ENCODE measurements at regions of chr5 and their contacts with region 1.

Region 1: GRCh38 chr5:140351609-140352334 is 5.4 kb upstream of the HBEGF start:
- DNase-seq: no peak
- H3K4me3 ChIP-seq: no peak overlapping the region
- H3K27ac ChIP-seq: no peak overlapping the region
- H3K27me3 ChIP-seq: no peaks in the 10 kb centered on the region
- CTCF ChIP-seq: peak; percentile 86

Region 2: GRCh38 chr5:140261403-140262171 is 90.2 kb before region 1 on chr5:
- CTCF ChIA-PET with region 1: interaction called, 98 read pairs
- POLR2A ChIA-PET with region 1: interaction called, 6 read pairs
- DNase-seq: peak; percentile 72
- H3K4me3 ChIP-seq: 0 out of 2 replicates have a peak overlapping the region, but pooled peaks have one; percentile 5
- H3K27ac ChIP-seq: no peak overlapping the region
- H3K27me3 ChIP-seq: no peaks in the 10 kb centered on the region
- CTCF ChIP-seq: peak; percentile 19; the same call in 1 of the 2 replicates

Region 3: GRCh38 chr5:140273401-140273877 is 78.3 kb before region 1 on chr5:
- CTCF ChIA-PET with region 1: interaction called, 16 read pairs
- POLR2A ChIA-PET with region 1: no interaction called
- DNase-seq: no peak
- H3K4me3 ChIP-seq: no peak overlapping the region
- H3K27ac ChIP-seq: no peak overlapping the region
- H3K27me3 ChIP-seq: no peaks in the 10 kb centered on the region
- CTCF ChIP-seq: no peak

Region 4: GRCh38 chr5:140322751-140323731 is 28.7 kb before region 1 on chr5:
- CTCF ChIA-PET with region 1: interaction called, 15 read pairs
- POLR2A ChIA-PET with region 1: interaction called, 8 read pairs
- DNase-seq: peak; percentile 88
- H3K4me3 ChIP-seq: peak overlapping the region; percentile 7; the same call in 1 of the 2 replicates
- H3K27ac ChIP-seq: peak overlapping the region; percentile 89
- H3K27me3 ChIP-seq: no peaks in the 10 kb centered on the region
- CTCF ChIP-seq: no peak

Region 5: DNA sequence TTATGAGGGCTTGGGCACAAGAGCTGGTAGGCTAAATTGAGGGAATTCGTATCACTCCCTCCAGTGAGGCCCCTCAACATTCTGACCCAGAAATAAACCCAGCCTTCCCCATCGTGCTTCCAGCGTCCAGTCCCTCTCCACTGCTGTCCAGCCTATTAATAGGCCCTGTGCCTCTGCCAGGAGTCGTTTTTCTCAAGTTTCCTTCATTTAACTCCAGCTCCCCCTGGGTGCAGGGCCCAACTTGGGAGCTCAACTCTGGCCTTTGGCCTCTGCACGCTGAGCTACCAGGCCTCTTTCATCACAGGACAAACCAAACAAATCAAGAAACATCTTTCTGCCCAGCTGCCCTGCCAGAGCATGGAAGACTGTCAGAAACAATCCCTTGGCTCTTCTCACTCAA is 15.4 kb before region 1 on chr5:
- CTCF ChIA-PET with region 1: interaction called, 34 read pairs
- POLR2A ChIA-PET with region 1: interaction called, 11 read pairs
- DNase-seq: no peak
- H3K4me3 ChIP-seq: no peak overlapping the region
- H3K27ac ChIP-seq: no peak overlapping the region
- H3K27me3 ChIP-seq: no peaks in the 10 kb centered on the region
- CTCF ChIP-seq: no peak

Measured in AG04450 (cell line).